Mammary epithelial cell (primary cell): ENCODE measurements at regions of chr3 and their contacts with region 1.

Region 1: GRCh38 chr3:74883690-74884089 is 269.2 kb upstream of the CNTN3 start:
- DNase-seq: peak; percentile 31
- H3K4me3 ChIP-seq: no peak overlapping the region
- H3K27ac ChIP-seq: no peak overlapping the region
- H3K4me1 ChIP-seq: no peaks in the 10 kb centered on the region
- H3K27me3 ChIP-seq: no peaks in the 10 kb centered on the region
- CTCF ChIP-seq: peak; percentile 64 to 80

Region 2: DNA sequence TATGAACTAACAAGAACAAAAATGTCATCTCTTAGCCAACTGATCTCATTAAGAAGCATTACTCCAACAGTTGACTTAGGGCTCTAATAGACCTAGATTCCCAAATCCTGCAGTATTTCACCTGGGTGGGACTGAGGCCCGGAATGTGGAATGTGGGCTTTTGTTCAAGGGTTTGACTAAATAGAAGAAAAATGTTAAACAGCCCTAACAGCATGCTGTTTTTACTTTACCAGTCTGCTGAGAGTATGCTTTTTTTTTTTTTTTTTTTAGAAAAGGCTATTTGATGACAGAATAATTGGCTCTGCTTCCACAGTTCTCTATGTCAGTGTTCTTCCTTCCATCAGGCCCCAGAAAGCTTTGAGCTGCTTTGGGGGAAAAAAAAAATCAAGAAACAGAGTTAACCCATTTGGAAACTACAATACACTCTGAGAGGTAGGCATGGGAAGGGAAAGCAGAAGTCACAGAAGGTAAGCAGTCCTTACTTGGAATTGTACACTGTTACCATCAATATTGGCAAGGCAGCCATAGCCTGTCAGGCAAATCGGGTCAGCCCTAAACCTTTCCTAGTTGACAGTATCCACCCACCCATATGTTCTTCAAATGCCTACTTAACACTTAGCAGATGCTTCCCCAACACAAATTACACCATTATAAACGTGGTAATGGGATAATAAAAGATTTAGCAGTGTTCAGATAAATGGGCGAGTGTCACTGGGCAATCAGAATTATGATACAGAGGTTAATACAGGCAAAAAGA is 493.4 kb before region 1 on chr3:
- CTCF ChIA-PET with region 1: no interaction called
- dilution Hi-C with region 1: no loop called
- in situ Hi-C with region 1: loop called in 1 of 2 experiments (anchors 25 kb)
- intact Hi-C with region 1: no loop called
- DNase-seq: no peak
- H3K4me3 ChIP-seq: no peak overlapping the region
- H3K27ac ChIP-seq: no peak overlapping the region
- H3K4me1 ChIP-seq: no peaks in the 10 kb centered on the region
- H3K27me3 ChIP-seq: no peaks in the 10 kb centered on the region
- CTCF ChIP-seq: no peak